Endothelial cell of umbilical vein (primary cell): ENCODE measurements at regions of chr6 and their contacts with region 1.

Region 1: DNA sequence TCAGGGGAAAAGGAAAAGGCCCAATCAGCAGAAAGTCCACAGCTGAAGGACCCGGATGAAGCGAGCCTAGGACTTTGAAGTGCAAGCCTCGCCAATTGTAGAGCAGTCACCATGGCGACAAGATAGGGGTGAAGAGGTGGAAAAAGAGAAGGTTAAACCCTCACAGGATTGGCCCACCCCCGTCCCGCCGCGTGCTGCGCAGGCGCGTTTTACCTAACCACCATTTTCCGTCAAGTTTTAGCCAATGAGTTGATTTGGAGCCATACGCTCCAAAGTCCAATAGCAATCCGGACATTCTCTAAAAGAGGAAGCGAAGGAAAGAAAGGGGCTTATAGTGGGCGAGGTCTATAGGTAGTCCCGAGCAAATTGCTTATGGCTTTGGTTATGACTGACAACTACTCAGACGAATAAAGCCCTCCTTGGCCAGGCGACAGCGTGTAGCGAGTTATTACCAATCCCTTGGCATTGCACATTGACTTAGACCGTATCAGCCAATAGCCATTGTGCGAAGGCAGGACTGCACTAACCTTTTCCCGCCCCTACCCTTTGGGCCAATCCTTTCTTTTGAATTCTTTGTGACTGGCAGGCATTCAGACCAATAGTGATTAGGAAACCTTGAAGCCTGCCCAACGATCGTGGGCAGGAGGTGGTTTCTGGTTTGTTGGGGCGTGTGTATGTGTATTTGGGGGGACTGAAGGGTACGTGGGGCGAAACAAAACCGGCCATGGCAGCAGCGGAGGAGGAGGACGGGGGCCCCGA is at the start of gene RNF5:
- DNase-seq: peak; percentile 100
- H3K4me3 ChIP-seq: peak within 1 kb of the TSS; percentile 56 to 67 (median 66)
- H3K27ac ChIP-seq: peak within 1 kb of the TSS; percentile 83
- H3K4me1 ChIP-seq: peaks cover 30% of the 10 kb centered on the region
- H3K27me3 ChIP-seq: no peaks in the 10 kb centered on the region
- CTCF ChIP-seq: no peak
- POLR2A ChIP-seq: no peak
- total RNA-seq, gene RNF5: 48.0 and 49.2 TPM in 2 replicates

Region 2: DNA sequence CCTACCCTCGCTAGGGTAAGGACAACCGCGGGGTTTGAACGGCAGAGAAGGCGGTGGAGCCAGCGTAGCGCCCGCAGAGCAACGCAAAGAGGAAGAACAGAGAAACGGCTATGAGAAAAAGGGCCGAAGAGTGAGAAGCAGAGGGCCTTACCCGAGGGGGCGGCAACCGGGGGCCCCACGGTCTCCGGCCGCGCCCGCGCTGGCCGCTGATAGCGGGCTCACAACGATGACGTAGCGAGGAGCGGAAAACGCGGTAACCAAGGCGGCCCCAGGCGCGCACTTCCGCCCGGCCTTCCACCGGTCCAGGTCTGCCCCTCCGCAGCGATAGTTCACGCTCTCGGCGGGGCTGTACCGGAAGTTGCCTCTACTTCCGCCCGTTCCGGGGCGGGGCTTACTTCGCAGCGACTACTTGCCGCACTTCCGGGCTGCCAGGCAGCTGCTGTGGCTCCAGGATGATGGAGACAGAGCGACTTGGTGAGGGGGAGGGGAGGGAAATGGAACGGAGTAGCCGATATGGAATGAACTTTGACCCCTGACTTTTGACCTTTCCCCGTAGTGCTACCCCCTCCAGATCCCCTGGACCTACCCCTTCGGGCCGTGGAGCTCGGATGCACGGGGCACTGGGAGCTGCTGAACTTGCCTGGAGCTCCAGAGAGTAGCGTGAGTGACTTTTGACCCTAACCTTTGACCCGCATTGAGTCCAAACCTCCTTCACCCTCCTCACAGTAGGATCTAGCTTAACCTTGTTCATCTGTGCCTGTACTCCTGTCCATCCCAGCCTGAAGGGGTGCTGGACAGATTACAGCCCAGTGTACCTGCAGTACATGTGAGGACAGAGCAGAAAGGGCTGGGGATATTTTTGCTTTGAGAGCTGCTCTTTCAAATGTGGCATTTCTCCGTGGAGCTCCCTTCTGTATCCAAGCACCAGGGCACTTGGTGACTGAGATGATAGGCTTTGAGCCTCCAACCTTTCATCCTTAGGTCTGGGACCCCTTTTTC is 218.9 kb before region 1 on chr6 and contains the starts of genes NELFE and SKIC2:
- CTCF ChIA-PET with region 1: no interaction called
- POLR2A ChIA-PET with region 1: no interaction called
- dilution Hi-C with region 1: no loop called
- intact Hi-C with region 1: loop called (anchors 5 kb)
- DNase-seq: peak; percentile 98
- H3K4me3 ChIP-seq: peak within 1 kb of the TSS; percentile 66 to 84 (median 70)
- H3K27ac ChIP-seq: peak within 1 kb of the TSS; percentile 75
- H3K4me1 ChIP-seq: peaks cover 17% of the 10 kb centered on the region
- H3K27me3 ChIP-seq: no peaks in the 10 kb centered on the region
- CTCF ChIP-seq: no peak
- POLR2A ChIP-seq: peak; percentile 93
- total RNA-seq, gene NELFE: 68.5 and 71.3 TPM in 2 replicates
- total RNA-seq, gene SKIC2: 67.8 and 76.7 TPM in 2 replicates

Region 3: DNA sequence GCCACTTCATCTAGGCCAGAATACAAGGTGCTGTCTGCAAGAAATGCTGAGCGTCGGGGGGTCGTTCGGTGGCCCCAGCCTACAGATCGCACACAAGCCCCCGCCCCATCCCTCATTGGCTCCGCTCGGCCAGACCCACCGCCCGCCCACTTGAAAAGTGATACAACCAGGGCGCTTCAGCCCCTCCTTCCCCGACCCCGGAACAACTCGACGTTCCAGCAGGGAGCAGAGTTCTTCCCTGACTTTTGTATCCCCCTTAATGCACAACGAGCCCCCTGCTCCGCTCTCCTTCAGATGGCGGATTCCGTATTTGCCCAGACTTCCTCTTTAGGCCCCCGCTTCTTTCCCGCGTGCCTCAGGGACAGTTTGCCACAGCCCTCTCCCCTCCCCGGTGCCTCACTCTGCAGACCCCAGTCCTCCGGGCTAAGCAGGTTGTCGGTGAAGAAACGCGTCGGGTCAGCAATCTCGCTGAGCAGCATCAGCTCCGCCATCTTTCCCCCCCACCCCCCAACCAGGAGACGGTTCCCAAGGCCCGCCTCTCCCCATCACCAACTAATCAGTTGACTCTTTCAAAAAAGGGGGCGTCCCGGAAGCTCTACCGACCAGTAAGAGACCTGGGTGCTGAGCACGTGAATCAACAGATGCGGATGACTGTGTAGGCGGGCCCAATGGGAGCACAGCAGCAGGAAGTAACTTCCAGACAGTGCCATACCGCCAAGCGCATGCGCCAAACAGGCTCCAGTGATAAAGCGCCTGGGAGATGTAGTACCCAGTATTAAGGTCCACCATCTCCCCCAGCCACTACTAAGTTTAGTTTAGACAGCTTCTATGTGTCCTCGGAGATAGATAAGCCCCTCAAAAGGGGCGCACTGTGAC is 50.0 kb before region 1 on chr6 and contains the start of gene ATF6B:
- CTCF ChIA-PET with region 1: interaction called, 3 read pairs
- POLR2A ChIA-PET with region 1: interaction called, 6 read pairs
- dilution Hi-C with region 1: no loop called
- intact Hi-C with region 1: loop called (anchors 1 kb)
- DNase-seq: peak; percentile 99
- H3K4me3 ChIP-seq: peak within 1 kb of the TSS; percentile 71 to 99 (median 84)
- H3K27ac ChIP-seq: peak within 1 kb of the TSS; percentile 83
- H3K4me1 ChIP-seq: peaks cover 20% of the 10 kb centered on the region
- H3K27me3 ChIP-seq: no peaks in the 10 kb centered on the region
- CTCF ChIP-seq: no peak
- POLR2A ChIP-seq: no peak
- total RNA-seq, gene ATF6B: 102 and 106 TPM in 2 replicates

Region 4: GRCh38 chr6:32153564-32154513 is 24.1 kb before region 1 on chr6 and contains the start of gene PPT2:
- CTCF ChIA-PET with region 1: interaction called, 4 read pairs
- POLR2A ChIA-PET with region 1: no interaction called
- dilution Hi-C with region 1: no loop called
- intact Hi-C with region 1: loop called (anchors 1 kb)
- DNase-seq: peak; percentile 94
- H3K4me3 ChIP-seq: peak within 1 kb of the TSS; percentile 41 to 71 (median 60)
- H3K27ac ChIP-seq: peak within 1 kb of the TSS; percentile 51
- H3K4me1 ChIP-seq: peaks cover 24% of the 10 kb centered on the region
- H3K27me3 ChIP-seq: peaks cover 4 to 5% of the 10 kb centered on the region in 2 experiments
- CTCF ChIP-seq: peak in 1 of 2 donors; percentile 16
- POLR2A ChIP-seq: peak; percentile 61
- total RNA-seq, gene PPT2: 27.2 and 27.6 TPM in 2 replicates

Region 5: GRCh38 chr6:32190054-32190851 is 12.3 kb after region 1 on chr6 and contains the start of gene PBX2:
- CTCF ChIA-PET with region 1: interaction called, 15 read pairs
- POLR2A ChIA-PET with region 1: interaction called, 9 read pairs
- dilution Hi-C with region 1: no loop called
- intact Hi-C with region 1: loop called (anchors 1 kb)
- DNase-seq: peak; percentile 93
- H3K4me3 ChIP-seq: peak within 1 kb of the TSS; percentile 32 to 83 (median 73)
- H3K27ac ChIP-seq: peak within 1 kb of the TSS; percentile 83
- H3K4me1 ChIP-seq: peaks cover 47% of the 10 kb centered on the region
- H3K27me3 ChIP-seq: no peaks in the 10 kb centered on the region
- CTCF ChIP-seq: no peak
- POLR2A ChIP-seq: peak; percentile 53
- total RNA-seq, gene PBX2: 95.9 and 100 TPM in 2 replicates